ENCODE measurements at regions of chr10 and their contacts with region 1.

Region 1: DNA sequence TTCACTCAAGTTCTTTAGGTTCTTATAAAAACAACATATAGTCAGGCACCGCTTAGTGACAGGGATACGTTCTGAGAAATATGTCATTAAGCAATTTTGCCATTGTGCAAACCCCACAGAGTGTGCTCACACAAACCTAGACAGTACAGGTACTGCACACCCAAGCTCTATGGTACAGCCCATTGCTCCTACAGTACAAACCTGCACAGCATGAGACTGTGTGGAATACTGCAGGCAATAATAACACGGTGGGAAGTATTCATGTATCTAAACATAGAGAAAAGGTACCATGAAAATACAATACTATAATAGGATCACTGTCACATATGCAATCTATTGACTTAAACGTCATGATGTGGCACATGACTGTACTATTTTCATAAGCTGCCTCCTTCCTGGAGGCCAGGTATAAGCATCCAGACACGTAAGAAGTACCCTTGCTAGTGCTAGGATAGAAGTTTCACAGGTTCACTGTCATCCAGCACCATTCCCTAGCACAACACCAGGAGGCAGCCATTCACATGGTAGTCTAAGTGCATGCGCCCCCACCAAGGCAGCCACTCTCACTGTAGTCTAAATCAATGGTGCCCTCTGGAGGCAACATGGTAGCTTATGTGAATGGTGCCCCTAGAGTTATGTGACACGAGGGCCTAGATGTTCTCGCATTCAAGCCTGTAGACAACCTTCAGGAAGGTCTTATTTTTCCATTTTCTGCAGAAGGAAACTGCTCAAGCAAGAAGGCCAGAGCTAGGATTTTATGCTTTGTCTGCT is 98.5 kb downstream of the ARHGAP22 start:
- DNase-seq: peak in 2 of 5 donors; percentile 16 to 28
- H3K4me3 ChIP-seq: no peak overlapping the region
- H3K27ac ChIP-seq: no peak overlapping the region
- H3K4me1 ChIP-seq: peaks cover 21% of the 10 kb centered on the region
- H3K27me3 ChIP-seq: no peaks in the 10 kb centered on the region
- CTCF ChIP-seq: peak in 1 of 3 donors; percentile 16
- EP300 ChIP-seq: no peak
- POLR2A ChIP-seq: no peak

Region 2: DNA sequence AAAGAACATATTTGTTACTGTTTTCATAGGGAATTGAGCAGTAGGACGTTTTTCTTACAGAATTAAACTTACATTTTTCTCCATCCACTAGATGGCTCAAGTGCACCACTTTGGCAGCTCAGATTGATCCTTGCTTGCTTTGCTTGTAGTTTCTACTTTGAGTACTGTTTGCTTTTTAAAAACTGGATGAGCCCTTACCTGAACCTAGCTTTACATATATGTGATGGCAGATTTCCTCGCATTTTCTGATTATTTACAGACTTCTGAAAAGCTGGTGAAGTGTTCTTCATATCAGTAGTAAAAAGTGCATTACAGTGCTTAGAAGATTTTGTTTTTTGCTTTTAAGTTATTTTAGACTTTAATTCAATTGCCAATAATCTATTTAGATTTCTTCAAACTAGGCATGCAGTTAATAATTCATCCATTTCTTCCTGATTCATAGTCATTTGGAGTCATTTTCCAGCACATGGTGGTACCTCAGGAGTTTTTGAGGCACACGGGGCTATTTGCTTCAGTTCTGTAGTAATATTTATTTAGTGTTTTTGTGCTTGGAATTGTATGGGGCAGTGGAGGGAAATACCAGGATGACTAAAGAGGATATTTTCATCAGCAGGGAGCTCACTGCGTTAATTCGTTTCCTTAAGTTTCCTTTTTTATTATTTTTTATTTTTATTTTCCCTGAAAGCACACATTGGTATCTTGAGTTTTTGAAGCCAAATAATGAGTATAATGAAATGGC is 142.5 kb before region 1 on chr10:
- intact Hi-C with region 1: loop called in 2 of 4 experiments (anchors 10 kb)
- DNase-seq: peak in 3 of 5 donors; percentile 15 to 45 (median 36)
- H3K4me3 ChIP-seq: no peak overlapping the region
- H3K27ac ChIP-seq: no peak overlapping the region
- H3K4me1 ChIP-seq: peaks cover 7% of the 10 kb centered on the region
- H3K27me3 ChIP-seq: no peaks in the 10 kb centered on the region
- CTCF ChIP-seq: peak; percentile 41 to 70 (median 61)
- EP300 ChIP-seq: no peak
- POLR2A ChIP-seq: no peak